ENCODE measurements at regions of chr12 and their contacts with region 1.

Region 1: DNA sequence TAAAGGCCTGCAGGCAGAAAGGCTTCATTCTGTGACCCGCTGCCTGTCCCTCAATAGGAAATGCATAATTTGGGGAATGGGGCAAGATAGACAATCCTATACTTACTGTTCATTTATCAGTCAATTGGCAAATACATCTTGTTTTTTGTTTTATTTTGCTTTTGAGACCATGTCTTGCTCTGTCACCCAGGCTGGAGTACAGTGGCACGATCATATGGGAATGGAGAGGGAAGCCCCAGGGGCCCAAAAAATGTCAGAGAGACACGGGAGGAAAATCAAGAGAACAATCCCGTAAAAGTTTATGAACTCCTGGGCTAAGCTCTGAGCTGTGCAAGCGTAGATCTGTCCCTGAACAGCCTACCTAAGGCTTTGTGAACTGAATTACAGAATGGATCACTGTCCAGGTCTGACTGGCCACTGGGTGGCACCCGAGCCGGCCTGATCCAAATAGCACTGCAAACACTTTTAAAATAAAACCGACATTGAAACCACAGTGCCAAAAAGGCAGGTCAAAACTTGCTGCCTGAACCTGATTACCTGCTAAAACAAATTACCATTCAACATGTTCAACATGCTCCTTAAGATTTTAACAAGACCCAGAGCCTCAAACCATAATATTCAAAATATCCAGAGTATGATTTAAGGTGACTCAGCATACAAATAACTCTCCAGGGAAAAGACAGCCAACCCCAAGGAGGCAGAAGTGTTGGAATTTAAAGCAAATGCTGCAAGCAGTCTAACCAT is 11.8 kb downstream of the COPS7A start:
- DNase-seq: peak; percentile 52 to 97 (median 74)

Region 2: DNA sequence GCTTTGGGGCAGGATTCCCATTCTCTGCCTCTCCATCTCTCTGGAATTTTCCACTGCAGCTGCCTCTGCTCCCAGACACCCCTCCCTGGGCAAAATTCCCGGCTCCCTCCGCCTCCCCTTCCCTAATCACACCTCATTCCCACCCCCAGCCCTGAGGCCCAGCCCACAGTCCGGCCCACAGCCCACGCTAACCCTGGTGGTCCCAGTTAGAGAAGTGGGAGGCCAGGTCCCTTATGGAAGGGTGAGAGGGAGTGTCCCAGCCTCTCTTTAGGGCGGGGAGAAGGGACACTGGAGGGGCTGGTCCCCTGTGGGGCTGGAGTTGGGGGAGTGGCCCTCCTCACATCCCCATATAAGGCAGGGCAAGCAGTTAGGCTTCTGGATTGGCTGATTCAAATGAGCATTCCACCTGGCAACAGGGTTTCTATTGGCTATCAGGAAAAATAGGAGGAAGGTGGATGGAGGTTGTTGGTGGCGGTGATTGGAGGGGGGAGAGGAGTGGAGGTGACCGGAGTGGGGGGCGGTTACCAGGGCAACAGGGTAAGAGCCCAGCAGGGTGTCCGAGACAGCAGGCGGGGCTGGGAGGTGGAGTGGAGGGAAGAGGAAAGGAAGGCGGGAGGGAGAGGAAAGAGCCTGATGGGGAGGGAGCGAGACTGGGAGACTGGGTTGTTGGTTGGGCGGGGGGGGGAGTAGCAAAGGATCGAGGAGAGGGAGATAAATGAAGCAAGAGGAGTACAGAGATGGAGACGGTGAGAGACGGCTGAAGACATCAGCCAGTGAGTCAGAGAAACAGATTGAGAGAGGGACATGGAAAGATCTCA is 28.6 kb after region 1 on chr12:
- intact Hi-C with region 1: no loop called
- DNase-seq: peak; percentile 60 to 99 (median 90)

Region 3: GRCh38 chr12:6778574-6779550 is 43.2 kb after region 1 on chr12:
- intact Hi-C with region 1: loop called (anchors 5 kb)
- DNase-seq: peak; percentile 83 to 98 (median 93)

Region 4: GRCh38 chr12:6825398-6826124 is 89.9 kb after region 1 on chr12:
- intact Hi-C with region 1: loop called (anchors 5 kb)
- DNase-seq: peak; percentile 83 to 98 (median 90)

Region 5: DNA sequence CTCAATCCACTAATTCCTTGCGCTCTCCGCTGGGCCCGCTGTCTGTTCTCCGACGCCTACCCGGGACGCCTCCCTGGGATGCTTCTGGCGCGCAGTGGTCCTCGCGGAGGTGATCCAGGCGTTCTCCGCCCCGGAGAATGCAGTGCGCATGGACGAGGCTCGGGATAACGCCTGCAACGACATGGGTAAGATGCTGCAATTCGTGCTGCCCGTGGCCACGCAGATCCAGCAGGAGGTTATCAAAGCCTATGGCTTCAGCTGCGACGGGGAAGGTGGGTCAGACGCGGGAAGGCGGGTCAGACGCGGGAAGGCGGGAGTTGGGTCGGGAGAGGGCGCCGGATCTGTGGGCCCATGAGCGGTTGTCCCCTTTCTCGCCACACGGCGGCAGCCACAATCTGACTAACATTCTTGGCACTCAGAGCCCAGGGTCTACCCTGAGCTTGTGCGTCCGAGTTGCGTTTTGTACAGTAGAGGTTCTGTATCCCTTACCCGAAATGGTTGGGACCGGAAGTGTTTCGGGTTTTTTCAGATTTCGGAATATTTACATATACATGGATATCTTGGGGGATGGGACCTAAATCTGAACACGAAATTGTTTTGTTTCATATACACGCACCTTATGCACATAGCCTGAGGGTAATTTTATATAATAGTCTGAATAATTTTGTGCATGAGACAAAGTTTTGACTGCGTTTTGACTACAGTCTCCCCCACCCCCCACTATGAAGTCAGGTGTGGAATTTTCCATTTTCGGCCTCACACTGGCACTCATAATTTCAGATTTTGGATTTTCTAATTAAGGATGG is 209.0 kb after region 1 on chr12:
- intact Hi-C with region 1: no loop called
- DNase-seq: peak; percentile 87 to 99 (median 93)

Region 6: DNA sequence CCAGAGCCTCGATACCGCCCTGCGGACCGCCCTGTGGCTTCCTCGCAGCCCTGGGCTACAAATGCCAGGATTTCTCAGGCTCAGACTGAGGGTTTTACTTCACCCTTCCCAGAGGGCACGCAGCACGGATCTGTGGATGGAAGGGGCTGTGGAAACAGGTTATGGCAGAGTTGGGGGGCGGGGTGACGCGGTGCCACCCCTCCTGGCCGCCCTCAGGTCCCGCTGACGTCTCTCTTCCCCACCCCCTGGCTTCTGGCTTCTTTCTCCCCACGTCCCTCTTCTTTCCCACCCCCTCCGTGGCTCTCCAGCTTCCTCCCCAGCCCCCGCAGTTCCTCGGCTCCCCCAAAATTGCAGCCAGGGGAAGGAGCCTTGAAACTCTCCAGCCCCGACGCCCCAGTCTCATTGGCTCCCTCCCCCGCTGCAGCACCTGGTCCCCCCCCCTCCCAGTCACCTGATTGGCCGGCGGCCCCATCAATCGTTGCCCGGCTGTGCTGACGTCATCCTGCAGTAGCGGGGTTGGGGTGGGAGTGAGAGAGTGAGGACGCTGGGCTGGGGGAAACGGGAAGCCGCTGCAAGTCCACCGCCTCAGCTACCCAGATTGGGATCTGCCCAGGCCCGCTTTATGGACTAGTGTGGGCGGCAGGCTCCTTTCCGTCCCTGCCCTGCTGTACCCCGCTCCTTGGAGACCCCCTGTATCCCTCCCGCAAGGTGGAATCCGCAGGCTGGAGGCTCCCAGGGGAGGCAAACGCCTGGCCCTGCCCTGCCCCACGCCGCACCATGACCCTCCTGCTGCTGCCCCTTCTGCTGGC is 394.5 kb after region 1 on chr12 and contains the start of gene CLSTN3:
- intact Hi-C with region 1: no loop called
- DNase-seq: peak; percentile 64 to 97 (median 85)

Region 7: DNA sequence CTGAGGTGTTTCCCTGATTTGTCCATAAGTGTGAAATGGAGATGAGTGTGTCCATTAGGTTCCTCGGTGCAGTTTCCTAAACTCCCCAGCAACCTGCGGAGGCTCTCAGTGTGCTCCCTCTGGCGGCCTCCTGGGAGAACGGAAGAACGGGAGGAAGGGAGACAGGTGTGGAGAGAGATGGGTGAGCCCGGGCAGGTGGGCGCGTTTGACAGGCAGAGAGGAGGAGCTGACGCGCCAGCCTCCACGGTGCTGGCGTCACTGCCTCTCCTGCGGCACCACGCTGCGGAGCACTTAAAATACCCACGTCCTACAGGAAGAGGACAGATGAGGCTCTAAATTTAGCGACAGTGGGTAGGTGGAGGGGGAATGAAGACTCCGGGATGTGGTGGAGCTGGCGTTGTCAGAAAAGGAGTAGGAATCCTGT is 427.1 kb after region 1 on chr12:
- intact Hi-C with region 1: no loop called
- DNase-seq: peak in 9 of 10 donors; percentile 17 to 95 (median 64)

Measured in posterior cingulate gyrus (tissue), 11 donors.